A549 (cell line): ENCODE measurements at regions of chr19 and their contacts with region 1.

Region 1: GRCh38 chr19:42108527-42109389 is 23.5 kb downstream of the POU2F2 start:
- DNase-seq: peak; percentile 95 to 98
- ATAC-seq: peak; percentile 81 to 91
- H3K4me3 ChIP-seq: no peak overlapping the region
- H3K27ac ChIP-seq: peak overlapping the region in 1 of 2 experiments; percentile 11; a peak in 1 of 6 replicates
- H3K4me1 ChIP-seq: peaks cover 18% of the 10 kb centered on the region
- CTCF ChIP-seq: peak; percentile 100
- EP300 ChIP-seq: no peak
- POLR2A ChIP-seq: no peak
- RAD21 ChIP-seq: peak; percentile 100

Region 2: GRCh38 chr19:41844601-41845000 is 264.2 kb before region 1 on chr19 and contains the start of gene LYPD4:
- CTCF ChIA-PET with region 1: no interaction called
- POLR2A ChIA-PET with region 1: no interaction called
- DNase-seq: peak in 1 of 2 experiments; percentile 58
- ATAC-seq: peak; percentile 20 to 68; a peak in 4 of 6 replicates
- H3K4me3 ChIP-seq: no peak within 1 kb of the TSS
- H3K27ac ChIP-seq: no peak within 1 kb of the TSS
- H3K4me1 ChIP-seq: no peaks in the 10 kb centered on the region
- CTCF ChIP-seq: no peak
- EP300 ChIP-seq: no peak
- POLR2A ChIP-seq: no peak
- RAD21 ChIP-seq: no peak
- polyA plus RNA-seq, gene LYPD4: not detected in 2 replicates

Region 3: GRCh38 chr19:41971363-41971762 is 137.4 kb before region 1 on chr19:
- CTCF ChIA-PET with region 1: no interaction called
- POLR2A ChIA-PET with region 1: no interaction called
- DNase-seq: no peak
- ATAC-seq: no peak
- H3K4me3 ChIP-seq: no peak overlapping the region
- H3K27ac ChIP-seq: no peak overlapping the region
- H3K4me1 ChIP-seq: no peaks in the 10 kb centered on the region
- CTCF ChIP-seq: no peak
- EP300 ChIP-seq: no peak
- POLR2A ChIP-seq: no peak
- RAD21 ChIP-seq: no peak

Region 4: DNA sequence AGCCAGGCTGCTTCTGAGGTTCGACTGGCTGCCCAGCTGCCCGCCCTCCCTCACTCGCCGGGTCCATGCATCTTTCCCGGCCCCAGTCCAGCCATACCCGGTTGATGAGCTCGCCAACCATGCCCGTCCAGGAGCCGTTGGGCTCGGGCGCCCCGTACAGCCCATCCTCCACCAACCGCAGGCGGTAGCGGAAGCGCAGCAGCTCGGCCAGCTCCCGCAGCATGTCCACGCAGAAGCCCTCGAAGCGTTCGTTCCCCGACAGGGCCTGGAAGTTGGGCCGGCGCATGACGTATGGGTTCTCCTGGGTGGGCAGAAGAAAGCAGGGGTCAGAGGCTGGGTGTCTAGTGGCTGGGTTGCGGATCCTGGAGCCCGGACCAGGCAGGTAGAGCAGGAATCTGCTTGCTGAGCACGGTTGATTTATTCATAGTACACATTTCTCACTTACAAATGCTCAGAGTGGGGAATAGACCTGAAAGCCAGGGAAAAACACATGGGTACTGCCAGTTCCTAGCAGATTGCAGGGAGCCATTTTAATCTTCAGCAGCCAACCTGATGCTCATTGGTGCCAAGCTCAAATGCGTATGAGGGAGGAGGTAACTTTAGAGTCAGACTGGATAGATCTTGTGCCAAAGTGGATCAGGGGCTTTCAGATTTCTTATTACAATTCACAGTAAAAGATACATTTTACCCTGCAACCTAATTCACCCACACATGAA is 66.1 kb before region 1 on chr19:
- CTCF ChIA-PET with region 1: no interaction called
- POLR2A ChIA-PET with region 1: no interaction called
- DNase-seq: no peak
- ATAC-seq: no peak
- H3K4me3 ChIP-seq: no peak overlapping the region
- H3K27ac ChIP-seq: no peak overlapping the region
- H3K4me1 ChIP-seq: no peaks in the 10 kb centered on the region
- CTCF ChIP-seq: no peak
- EP300 ChIP-seq: no peak
- POLR2A ChIP-seq: no peak
- RAD21 ChIP-seq: no peak

Region 5: GRCh38 chr19:42121656-42122069 is 12.9 kb after region 1 on chr19:
- CTCF ChIA-PET with region 1: interaction called, 386 read pairs
- POLR2A ChIA-PET with region 1: interaction called, 3 read pairs
- DNase-seq: peak in 1 of 2 experiments; percentile 66
- ATAC-seq: peak; percentile 10 to 37; a peak in 3 of 6 replicates
- H3K4me3 ChIP-seq: no peak overlapping the region
- H3K27ac ChIP-seq: peak overlapping the region in 1 of 2 experiments; percentile 56; a peak in 3 of 6 replicates
- H3K4me1 ChIP-seq: peaks cover 14% of the 10 kb centered on the region
- CTCF ChIP-seq: no peak
- EP300 ChIP-seq: no peak
- POLR2A ChIP-seq: no peak
- RAD21 ChIP-seq: no peak

Region 6: DNA sequence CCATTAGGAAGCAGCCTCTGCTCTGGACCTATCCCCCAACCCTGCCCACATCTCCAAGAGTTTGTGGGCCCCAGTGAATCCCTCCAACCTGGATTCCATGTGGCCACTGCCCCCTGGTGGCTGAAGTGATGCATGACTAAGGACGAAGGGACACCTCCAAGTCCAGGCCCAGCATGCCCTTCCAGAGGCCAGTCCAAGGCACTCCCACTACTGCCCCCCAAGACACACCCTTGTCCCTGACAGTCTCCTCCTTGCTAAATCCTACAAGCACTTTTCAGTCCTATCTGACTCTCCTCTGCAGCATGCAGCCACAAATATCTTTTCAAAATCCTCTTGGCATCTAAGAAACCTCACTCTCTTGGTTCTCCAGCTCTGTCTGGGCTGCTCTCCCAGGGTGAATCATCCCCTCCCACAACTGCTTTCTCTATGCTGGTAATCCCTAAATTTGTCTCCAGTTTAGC is 75.7 kb after region 1 on chr19:
- CTCF ChIA-PET with region 1: interaction called, 213 read pairs
- POLR2A ChIA-PET with region 1: interaction called, 7 read pairs
- DNase-seq: peak; percentile 91 to 96
- ATAC-seq: peak; percentile 77 to 94
- H3K4me3 ChIP-seq: no peak overlapping the region
- H3K27ac ChIP-seq: no peak overlapping the region
- H3K4me1 ChIP-seq: no peaks in the 10 kb centered on the region
- CTCF ChIP-seq: peak; percentile 99
- EP300 ChIP-seq: no peak
- POLR2A ChIP-seq: no peak
- RAD21 ChIP-seq: peak; percentile 94 to 98

Region 7: DNA sequence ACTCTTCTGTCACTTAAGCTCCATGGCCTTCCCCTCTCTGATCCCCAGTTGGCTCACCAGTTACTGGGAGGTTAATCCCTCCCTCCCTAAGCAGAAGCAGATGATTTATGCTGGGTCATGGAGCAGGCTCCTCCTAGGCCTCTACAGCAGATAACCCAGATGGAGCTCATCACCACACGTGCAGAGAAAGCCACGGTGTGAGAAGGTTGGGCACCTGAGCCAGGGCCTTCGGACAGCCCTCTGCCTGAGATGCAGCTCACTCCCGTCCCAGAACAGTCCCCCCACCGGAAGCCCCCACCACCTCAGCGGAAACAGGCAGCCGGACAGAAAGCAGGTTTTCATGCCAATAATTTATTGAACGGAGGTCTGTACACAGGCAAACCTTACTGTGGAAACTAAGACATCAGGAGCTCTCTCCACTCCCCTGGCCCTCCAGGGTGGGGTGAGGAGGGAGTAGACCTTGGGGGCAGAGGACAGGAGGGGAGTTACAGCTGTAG is 121.1 kb after region 1 on chr19:
- CTCF ChIA-PET with region 1: interaction called, 268 read pairs
- POLR2A ChIA-PET with region 1: no interaction called
- DNase-seq: peak in 1 of 2 experiments; percentile 65
- ATAC-seq: peak; percentile 36 to 56; a peak in 5 of 6 replicates
- H3K4me3 ChIP-seq: no peak overlapping the region
- H3K27ac ChIP-seq: peak overlapping the region in 1 of 2 experiments; percentile 29; a peak in 3 of 6 replicates
- H3K4me1 ChIP-seq: peaks cover 11% of the 10 kb centered on the region; the same call in 2 of the 3 replicates
- CTCF ChIP-seq: no peak
- EP300 ChIP-seq: no peak
- POLR2A ChIP-seq: no peak
- RAD21 ChIP-seq: no peak

Region 8: GRCh38 chr19:42295831-42296525 is 187.2 kb after region 1 on chr19:
- CTCF ChIA-PET with region 1: interaction called, 27 read pairs
- POLR2A ChIA-PET with region 1: no interaction called
- DNase-seq: peak; percentile 86 to 93
- ATAC-seq: peak; percentile 72 to 84
- H3K4me3 ChIP-seq: no peak overlapping the region
- H3K27ac ChIP-seq: no peak overlapping the region
- H3K4me1 ChIP-seq: peaks cover 6% of the 10 kb centered on the region
- CTCF ChIP-seq: peak; percentile 98
- EP300 ChIP-seq: no peak
- POLR2A ChIP-seq: no peak
- RAD21 ChIP-seq: peak; percentile 83 to 88

Region 9: GRCh38 chr19:42433503-42434260 is 324.9 kb after region 1 on chr19:
- CTCF ChIA-PET with region 1: interaction called, 12 read pairs
- POLR2A ChIA-PET with region 1: no interaction called
- DNase-seq: peak; percentile 90 to 91
- ATAC-seq: peak; percentile 91 to 96
- H3K4me3 ChIP-seq: no peak overlapping the region
- H3K27ac ChIP-seq: peak overlapping the region; percentile 58 to 75
- H3K4me1 ChIP-seq: peaks cover 21% of the 10 kb centered on the region
- CTCF ChIP-seq: peak; percentile 99
- EP300 ChIP-seq: no peak
- POLR2A ChIP-seq: no peak
- RAD21 ChIP-seq: peak; percentile 92 to 98